ENCODE measurements at regions of chr13 and their contacts with region 1.

Region 1: GRCh38 chr13:51797664-51798488 is 6.1 kb downstream of the DHRS12 start:
- DNase-seq: no peak
- ATAC-seq: peak; percentile 67
- H3K4me3 ChIP-seq: no peak overlapping the region
- H3K27ac ChIP-seq: no peak overlapping the region
- H3K4me1 ChIP-seq: peaks cover 39% of the 10 kb centered on the region
- H3K27me3 ChIP-seq: no peaks in the 10 kb centered on the region
- CTCF ChIP-seq: peak; percentile 62 to 84 (median 69); a peak in 5 of 6 replicates
- EP300 ChIP-seq: no peak
- POLR2A ChIP-seq: no peak
- RAD21 ChIP-seq: peak; percentile 93

Region 2: GRCh38 chr13:51125498-51126226 is 672.2 kb before region 1 on chr13:
- CTCF ChIA-PET with region 1: interaction called, 152 read pairs
- POLR2A ChIA-PET with region 1: interaction called, 3 read pairs
- RAD21 ChIA-PET with region 1: interaction called, 104 read pairs
- SMC1A ChIA-PET with region 1: interaction called, 71 read pairs
- in situ Hi-C with region 1: loop called (anchors 5 kb)
- intact Hi-C with region 1: loop called (anchors 2 kb)
- DNase-seq: peak; percentile 16
- ATAC-seq: peak; percentile 89
- H3K4me3 ChIP-seq: no peak overlapping the region
- H3K27ac ChIP-seq: no peak overlapping the region
- H3K4me1 ChIP-seq: no peaks in the 10 kb centered on the region
- H3K27me3 ChIP-seq: no peaks in the 10 kb centered on the region; a peak in 1 of 4 replicates
- CTCF ChIP-seq: peak; percentile 78 to 89 (median 86)
- EP300 ChIP-seq: no peak
- POLR2A ChIP-seq: no peak
- RAD21 ChIP-seq: peak; percentile 89

Region 3: GRCh38 chr13:51286135-51287002 is 511.5 kb before region 1 on chr13:
- CTCF ChIA-PET with region 1: interaction called, 78 read pairs
- POLR2A ChIA-PET with region 1: no interaction called
- RAD21 ChIA-PET with region 1: interaction called, 66 read pairs
- SMC1A ChIA-PET with region 1: interaction called, 49 read pairs
- in situ Hi-C with region 1: no loop called
- intact Hi-C with region 1: loop called (anchors 5 kb)
- DNase-seq: peak; percentile 7
- ATAC-seq: peak; percentile 98
- H3K4me3 ChIP-seq: no peak overlapping the region
- H3K27ac ChIP-seq: no peak overlapping the region
- H3K4me1 ChIP-seq: no peaks in the 10 kb centered on the region
- H3K27me3 ChIP-seq: no peaks in the 10 kb centered on the region; a peak in 1 of 4 replicates
- CTCF ChIP-seq: peak; percentile 86 to 94 (median 93)
- EP300 ChIP-seq: no peak
- POLR2A ChIP-seq: no peak
- RAD21 ChIP-seq: peak; percentile 85

Region 4: GRCh38 chr13:51385114-51385513 is 412.8 kb before region 1 on chr13:
- CTCF ChIA-PET with region 1: interaction called, 12 read pairs
- POLR2A ChIA-PET with region 1: no interaction called
- RAD21 ChIA-PET with region 1: interaction called, 5 read pairs
- SMC1A ChIA-PET with region 1: interaction called, 4 read pairs
- in situ Hi-C with region 1: no loop called
- intact Hi-C with region 1: no loop called
- DNase-seq: no peak
- ATAC-seq: no peak
- H3K4me3 ChIP-seq: no peak overlapping the region
- H3K27ac ChIP-seq: no peak overlapping the region
- H3K4me1 ChIP-seq: no peaks in the 10 kb centered on the region
- H3K27me3 ChIP-seq: no peaks in the 10 kb centered on the region
- CTCF ChIP-seq: no peak
- EP300 ChIP-seq: no peak
- POLR2A ChIP-seq: no peak
- RAD21 ChIP-seq: no peak

Region 5: DNA sequence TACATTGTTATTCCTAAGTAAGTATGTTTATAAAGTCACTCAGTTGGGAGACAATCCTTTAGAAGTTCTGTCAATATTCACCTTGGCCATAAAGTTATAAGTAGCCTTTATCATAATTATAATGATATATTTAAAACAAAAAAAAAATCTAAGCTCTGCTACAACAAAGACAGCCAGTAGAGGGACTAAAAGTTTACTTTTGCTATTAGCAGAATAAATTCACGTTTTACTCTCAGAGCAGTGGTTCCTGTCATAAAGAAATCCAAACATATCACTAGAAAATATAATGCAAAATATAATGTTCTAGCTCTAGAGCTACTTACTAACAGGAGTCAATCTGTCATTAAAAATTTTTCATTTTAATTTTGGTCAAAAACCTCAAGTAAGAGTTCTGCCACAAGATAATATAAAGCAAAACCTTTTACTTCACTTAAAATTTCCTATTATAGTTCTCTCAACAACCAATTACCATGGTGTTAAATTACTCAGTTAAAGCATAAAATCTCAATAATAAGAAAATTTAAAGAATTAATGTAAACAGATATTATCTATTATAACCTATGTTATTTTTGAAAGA is 362.8 kb before region 1 on chr13:
- CTCF ChIA-PET with region 1: interaction called, 100 read pairs
- POLR2A ChIA-PET with region 1: interaction called, 4 read pairs
- RAD21 ChIA-PET with region 1: interaction called, 38 read pairs
- SMC1A ChIA-PET with region 1: interaction called, 39 read pairs
- in situ Hi-C with region 1: loop called (anchors 5 kb)
- intact Hi-C with region 1: loop called (anchors 1 kb)
- DNase-seq: no peak
- ATAC-seq: peak; percentile 67
- H3K4me3 ChIP-seq: no peak overlapping the region
- H3K27ac ChIP-seq: no peak overlapping the region
- H3K4me1 ChIP-seq: no peaks in the 10 kb centered on the region
- H3K27me3 ChIP-seq: no peaks in the 10 kb centered on the region
- CTCF ChIP-seq: peak; percentile 39 to 61 (median 39); a peak in 4 of 6 replicates
- EP300 ChIP-seq: no peak
- POLR2A ChIP-seq: no peak
- RAD21 ChIP-seq: peak; percentile 78

Region 6: DNA sequence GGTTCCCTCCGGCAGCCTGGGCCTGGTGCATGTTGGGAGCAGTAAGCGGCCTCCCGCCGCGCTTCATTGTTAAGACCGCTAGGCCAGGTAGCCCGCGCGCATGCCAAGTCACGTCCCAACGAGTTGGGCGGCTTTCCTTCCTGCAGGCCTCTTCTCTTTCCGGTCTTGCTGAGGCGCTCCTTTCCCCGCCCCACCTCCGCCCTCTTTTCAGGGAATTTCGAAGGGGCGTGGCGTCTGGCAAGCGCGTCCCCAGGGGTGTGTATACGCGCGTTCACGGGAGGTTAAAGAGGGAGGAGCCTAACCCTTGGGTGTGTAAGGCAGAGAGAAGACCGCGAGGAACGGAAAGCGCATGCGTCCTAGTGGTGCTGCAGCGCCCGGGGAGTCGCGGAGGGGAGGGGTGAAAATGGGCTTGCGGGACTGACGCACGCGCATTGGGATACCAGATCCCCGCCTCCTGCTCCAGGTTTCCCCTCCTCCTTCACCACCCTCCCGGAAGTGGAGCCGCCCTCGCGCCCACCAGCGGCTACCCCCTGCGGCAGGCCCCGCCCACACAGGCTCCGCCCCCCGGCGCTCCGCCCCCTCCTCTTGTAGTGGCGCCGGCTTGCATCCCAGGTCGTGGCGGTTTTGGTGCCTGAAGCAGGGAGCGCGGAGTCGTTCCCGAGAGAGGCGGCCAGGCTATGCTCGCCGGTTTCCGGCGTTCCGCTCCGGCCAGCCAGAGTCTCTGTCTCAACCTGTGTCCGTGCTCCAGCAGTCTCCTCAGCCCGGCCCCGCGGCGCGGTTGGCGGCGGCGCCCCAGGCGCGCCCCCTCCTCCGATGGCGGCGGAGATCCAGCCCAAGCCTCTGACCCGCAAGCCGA is 213.8 kb before region 1 on chr13 and contains the start of gene WDFY2:
- CTCF ChIA-PET with region 1: interaction called, 26 read pairs
- POLR2A ChIA-PET with region 1: no interaction called
- RAD21 ChIA-PET with region 1: interaction called, 25 read pairs
- SMC1A ChIA-PET with region 1: interaction called, 18 read pairs
- in situ Hi-C with region 1: no loop called
- intact Hi-C with region 1: loop called (anchors 2 kb)
- DNase-seq: peak; percentile 99
- ATAC-seq: peak; percentile 86
- H3K4me3 ChIP-seq: peak within 1 kb of the TSS; percentile 95
- H3K27ac ChIP-seq: peak within 1 kb of the TSS; percentile 64
- H3K4me1 ChIP-seq: peaks cover 9% of the 10 kb centered on the region; the same call in 1 of the 2 replicates
- H3K27me3 ChIP-seq: no peaks in the 10 kb centered on the region
- CTCF ChIP-seq: peak in 1 of 3 experiments; percentile 24; a peak in 2 of 6 replicates
- EP300 ChIP-seq: no peak
- POLR2A ChIP-seq: peak; percentile 72
- RAD21 ChIP-seq: peak; percentile 3; the same call in 1 of the 2 replicates
- polyA plus RNA-seq, gene WDFY2: 2.1 to 2.7 TPM

Region 7: DNA sequence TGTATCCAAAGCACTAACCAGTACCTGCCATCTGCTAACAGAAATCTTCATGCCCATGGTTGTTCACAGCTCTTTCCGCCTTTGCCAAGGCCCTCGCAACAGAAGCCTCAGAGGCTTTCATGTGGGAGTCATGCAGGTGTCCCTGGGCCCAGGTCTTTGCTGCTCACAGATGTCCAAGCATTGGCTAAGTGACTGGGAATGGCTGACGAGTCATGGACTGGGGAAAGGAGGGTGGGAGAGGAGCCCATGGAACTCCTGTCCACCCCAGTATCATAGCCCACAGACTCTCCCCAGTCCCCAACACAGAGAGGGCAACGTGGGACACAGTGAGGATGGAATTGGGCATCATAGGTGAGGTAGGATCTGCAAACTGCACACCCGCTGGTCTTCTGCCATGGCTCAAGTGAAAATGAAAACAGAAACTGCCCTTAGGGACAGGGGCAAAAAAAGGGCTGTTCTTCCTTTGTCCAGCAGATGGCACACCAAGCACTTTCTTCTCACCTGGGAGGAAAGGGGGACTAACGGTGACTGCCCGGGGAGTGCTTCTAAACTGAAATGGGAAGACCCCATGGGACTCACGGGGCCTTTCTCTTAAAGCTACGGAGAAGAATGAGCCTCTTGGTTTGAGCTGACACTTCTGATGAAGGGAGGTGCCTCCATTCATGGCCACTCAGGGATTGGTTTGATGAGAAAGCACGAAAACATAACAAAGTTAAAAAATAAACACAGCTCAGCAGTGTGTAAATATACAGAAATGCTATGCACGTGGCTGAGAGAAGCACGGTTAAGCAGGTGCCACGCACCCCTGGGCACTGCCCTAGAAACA is 17.2 kb after region 1 on chr13:
- CTCF ChIA-PET with region 1: interaction called, 47 read pairs
- POLR2A ChIA-PET with region 1: interaction called, 5 read pairs
- RAD21 ChIA-PET with region 1: interaction called, 59 read pairs
- SMC1A ChIA-PET with region 1: interaction called, 26 read pairs
- in situ Hi-C with region 1: no loop called
- intact Hi-C with region 1: no loop called
- DNase-seq: no peak
- ATAC-seq: peak; percentile 80
- H3K4me3 ChIP-seq: peak overlapping the region; percentile 24; the same call in 1 of the 2 replicates
- H3K27ac ChIP-seq: peak overlapping the region; percentile 28
- H3K4me1 ChIP-seq: peaks cover 32% of the 10 kb centered on the region
- H3K27me3 ChIP-seq: no peaks in the 10 kb centered on the region
- CTCF ChIP-seq: peak; percentile 83 to 97 (median 90)
- EP300 ChIP-seq: no peak
- POLR2A ChIP-seq: no peak
- RAD21 ChIP-seq: peak; percentile 88

Region 8: DNA sequence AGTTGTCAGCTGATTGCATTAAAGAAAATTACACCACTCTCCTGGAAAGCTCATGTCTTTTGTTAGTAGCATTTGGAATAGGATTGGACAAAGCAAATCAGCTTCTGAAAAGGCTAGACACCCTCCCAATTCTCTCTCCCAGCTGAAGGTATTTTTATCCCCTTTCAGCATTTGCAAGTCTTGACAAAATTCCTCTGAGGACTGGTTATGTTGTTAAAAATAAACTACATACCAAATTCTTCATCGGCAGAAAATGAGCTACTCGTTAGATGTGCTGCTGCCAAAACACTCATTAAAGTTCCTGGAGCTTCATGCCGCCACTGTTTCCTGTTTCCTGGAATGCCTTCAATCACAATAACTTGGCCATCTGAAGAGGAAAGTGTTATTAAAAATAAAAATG is 263.7 kb after region 1 on chr13:
- CTCF ChIA-PET with region 1: no interaction called
- POLR2A ChIA-PET with region 1: no interaction called
- RAD21 ChIA-PET with region 1: no interaction called
- SMC1A ChIA-PET with region 1: no interaction called
- in situ Hi-C with region 1: no loop called
- intact Hi-C with region 1: no loop called
- DNase-seq: no peak
- ATAC-seq: no peak
- H3K4me3 ChIP-seq: no peak overlapping the region
- H3K27ac ChIP-seq: no peak overlapping the region
- H3K4me1 ChIP-seq: no peaks in the 10 kb centered on the region
- H3K27me3 ChIP-seq: no peaks in the 10 kb centered on the region
- CTCF ChIP-seq: no peak
- EP300 ChIP-seq: no peak
- POLR2A ChIP-seq: no peak
- RAD21 ChIP-seq: no peak

Measured in GM12878 (cell line).